ENCODE measurements at regions of chr4 and their contacts with region 1.

Region 1: DNA sequence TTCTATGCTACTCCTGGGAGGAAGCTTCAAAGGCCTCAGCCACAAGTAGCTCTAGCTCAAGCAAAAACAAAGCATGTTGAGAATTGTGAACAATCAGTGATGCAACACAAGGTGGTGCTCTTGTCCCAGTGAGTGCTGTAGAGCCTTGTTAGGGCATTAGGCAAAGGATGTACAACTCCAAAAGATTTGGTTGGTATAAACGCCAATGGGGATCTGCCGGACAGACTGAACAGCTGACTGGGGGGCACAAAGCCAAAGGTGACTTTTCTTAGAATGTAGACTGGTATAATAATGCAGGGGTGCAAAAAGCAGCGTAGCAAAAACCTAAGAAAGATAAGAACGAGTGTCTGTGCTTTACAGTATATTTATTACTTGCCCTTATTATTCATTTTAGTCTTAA is 62.6 kb upstream of the ALB start:
- DNase-seq: peak; percentile 35
- H3K4me3 Mint-ChIP-seq: no peak overlapping the region
- H3K27ac Mint-ChIP-seq: no peak overlapping the region
- H3K4me1 Mint-ChIP-seq: peaks cover 14% of the 10 kb centered on the region
- H3K27me3 Mint-ChIP-seq: no peaks in the 10 kb centered on the region
- CTCF ChIP-seq: no peak

Region 2: DNA sequence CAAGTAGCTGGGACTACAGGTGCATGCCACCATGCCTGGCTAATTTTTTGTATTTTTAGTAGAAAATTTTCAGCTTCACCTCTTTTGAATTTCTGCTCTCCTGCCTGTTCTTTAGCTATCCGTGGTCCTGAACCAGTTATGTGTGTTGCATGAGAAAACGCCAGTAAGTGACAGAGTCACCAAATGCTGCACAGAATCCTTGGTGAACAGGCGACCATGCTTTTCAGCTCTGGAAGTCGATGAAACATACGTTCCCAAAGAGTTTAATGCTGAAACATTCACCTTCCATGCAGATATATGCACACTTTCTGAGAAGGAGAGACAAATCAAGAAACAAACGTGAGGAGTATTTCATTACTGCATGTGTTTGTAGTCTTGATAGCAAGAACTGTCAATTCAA is 76.5 kb after region 1 on chr4:
- CTCF ChIA-PET with region 1: no interaction called
- intact Hi-C with region 1: no loop called
- DNase-seq: no peak
- H3K4me3 Mint-ChIP-seq: no peak overlapping the region
- H3K27ac Mint-ChIP-seq: no peak overlapping the region
- H3K4me1 Mint-ChIP-seq: no peaks in the 10 kb centered on the region
- H3K27me3 Mint-ChIP-seq: no peaks in the 10 kb centered on the region
- CTCF ChIP-seq: no peak

Region 3: DNA sequence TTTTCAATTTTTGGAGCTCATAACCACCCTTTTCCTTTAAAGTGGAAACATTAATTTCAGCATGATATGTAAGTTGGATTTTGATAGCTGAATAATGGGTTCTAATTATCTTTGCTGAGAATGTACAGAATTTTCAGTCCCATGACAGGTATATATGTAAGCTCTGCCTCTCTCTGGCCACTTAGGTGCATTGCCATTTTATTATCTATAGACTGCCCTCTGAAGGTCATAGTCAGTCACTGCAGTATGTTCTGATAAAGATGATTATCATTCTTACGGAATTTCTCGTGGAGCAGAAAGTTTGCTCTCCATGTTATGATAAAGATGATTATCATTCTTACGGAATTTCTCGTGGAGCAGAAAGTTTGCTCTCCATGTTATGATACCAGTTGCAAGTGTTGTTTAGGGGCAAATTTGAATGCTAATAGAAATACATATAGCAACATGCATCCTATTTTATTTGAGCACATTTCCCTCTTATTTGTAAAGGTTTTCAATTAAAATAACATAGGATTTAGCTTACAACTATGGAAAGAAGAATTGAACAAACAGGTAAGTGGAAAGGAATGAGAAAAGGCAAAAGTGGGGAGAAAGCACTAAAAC is 105.0 kb after region 1 on chr4:
- CTCF ChIA-PET with region 1: interaction called, 42 read pairs
- intact Hi-C with region 1: loop called (anchors 1 kb)
- DNase-seq: peak; percentile 17
- H3K4me3 Mint-ChIP-seq: no peak overlapping the region
- H3K27ac Mint-ChIP-seq: no peak overlapping the region
- H3K4me1 Mint-ChIP-seq: peaks cover 5% of the 10 kb centered on the region
- H3K27me3 Mint-ChIP-seq: no peaks in the 10 kb centered on the region
- CTCF ChIP-seq: peak; percentile 65